Naive thymus-derived CD4-positive, alpha-beta T cell (primary cell): ENCODE measurements at regions of chr11 and their contacts with region 1.

Region 1: DNA sequence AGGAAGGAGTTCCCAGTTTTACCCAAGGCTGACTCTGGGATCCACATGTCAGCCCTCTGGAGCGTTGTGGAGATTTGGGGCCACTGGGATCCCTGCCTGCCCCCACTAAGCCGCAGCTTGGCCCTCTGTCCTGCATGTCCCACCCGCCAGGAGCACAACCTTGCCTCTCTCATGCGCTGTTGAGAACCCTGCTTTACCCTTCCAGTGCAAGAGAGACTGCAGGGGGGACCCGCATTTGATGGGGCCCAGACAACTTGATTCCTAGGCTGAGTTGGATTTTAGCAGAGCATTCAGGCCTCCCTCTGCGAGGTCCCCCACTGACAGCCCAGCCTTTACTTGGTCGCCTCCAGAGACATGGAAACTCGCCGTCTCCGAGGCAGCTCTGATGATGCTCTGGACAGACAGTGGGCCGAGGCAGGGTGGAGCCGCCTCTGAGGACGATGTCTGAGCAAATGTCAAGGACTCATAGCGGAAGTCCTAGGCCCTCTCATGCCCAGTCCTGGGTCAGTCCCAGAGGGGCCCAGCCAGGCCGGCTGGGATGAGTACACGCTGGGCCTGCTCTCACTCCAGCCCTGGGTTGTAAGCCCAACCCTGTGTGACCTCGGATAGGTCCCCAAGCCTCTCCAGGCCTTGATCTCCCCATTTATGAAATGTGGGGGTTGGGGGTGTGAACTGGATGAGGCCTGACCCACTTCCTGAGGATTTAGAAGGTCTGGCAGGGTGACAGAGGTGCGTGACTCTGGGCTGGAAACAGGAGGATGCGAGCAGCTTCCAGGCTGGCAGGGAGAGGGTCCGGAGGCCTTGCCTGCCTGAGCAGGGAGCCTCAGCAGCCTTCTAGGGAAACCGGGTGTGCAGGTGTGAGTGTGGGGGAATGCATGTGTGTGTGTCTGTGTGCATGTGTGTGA is 630 bp downstream of the CD5 start:
- DNase-seq: peak in 3 of 9 donors; percentile 39 to 47 (median 40)
- ATAC-seq: peak; percentile 28
- H3K4me3 ChIP-seq: peak overlapping the region; percentile 100
- H3K4me3 Mint-ChIP-seq: peak overlapping the region in 1 of 10 donors; percentile 97
- H3K27ac ChIP-seq: peak overlapping the region; percentile 98
- H3K27ac Mint-ChIP-seq: no peak overlapping the region
- H3K4me1 ChIP-seq: peaks cover 39 to 46% of the 10 kb centered on the region in 2 donors
- H3K4me1 Mint-ChIP-seq: peaks cover 17 to 48% (median 40%) of the 10 kb centered on the region in 7 donors
- H3K27me3 ChIP-seq: no peaks in the 10 kb centered on the region
- H3K27me3 Mint-ChIP-seq: no peaks in the 10 kb centered on the region

Region 2: GRCh38 chr11:61021661-61022212 is 81.2 kb before region 1 on chr11:
- CTCF ChIA-PET with region 1: no interaction called
- POLR2A ChIA-PET with region 1: interaction called, 10 read pairs
- intact Hi-C with region 1: loop called in 1 of 2 experiments (anchors 1 kb)
- DNase-seq: peak; percentile 72 to 98 (median 96)
- ATAC-seq: peak; percentile 91
- H3K4me3 ChIP-seq: peak overlapping the region; percentile 53
- H3K4me3 Mint-ChIP-seq: peak overlapping the region; percentile 68 to 90 (median 81)
- H3K27ac ChIP-seq: peak overlapping the region; percentile 82
- H3K27ac Mint-ChIP-seq: peak overlapping the region; percentile 88 to 100 (median 98)
- H3K4me1 ChIP-seq: peaks cover 49 to 56% of the 10 kb centered on the region in 2 donors
- H3K4me1 Mint-ChIP-seq: peaks cover 40 to 79% (median 76%) of the 10 kb centered on the region in 7 donors
- H3K27me3 ChIP-seq: no peaks in the 10 kb centered on the region
- H3K27me3 Mint-ChIP-seq: no peaks in the 10 kb centered on the region

Region 3: DNA sequence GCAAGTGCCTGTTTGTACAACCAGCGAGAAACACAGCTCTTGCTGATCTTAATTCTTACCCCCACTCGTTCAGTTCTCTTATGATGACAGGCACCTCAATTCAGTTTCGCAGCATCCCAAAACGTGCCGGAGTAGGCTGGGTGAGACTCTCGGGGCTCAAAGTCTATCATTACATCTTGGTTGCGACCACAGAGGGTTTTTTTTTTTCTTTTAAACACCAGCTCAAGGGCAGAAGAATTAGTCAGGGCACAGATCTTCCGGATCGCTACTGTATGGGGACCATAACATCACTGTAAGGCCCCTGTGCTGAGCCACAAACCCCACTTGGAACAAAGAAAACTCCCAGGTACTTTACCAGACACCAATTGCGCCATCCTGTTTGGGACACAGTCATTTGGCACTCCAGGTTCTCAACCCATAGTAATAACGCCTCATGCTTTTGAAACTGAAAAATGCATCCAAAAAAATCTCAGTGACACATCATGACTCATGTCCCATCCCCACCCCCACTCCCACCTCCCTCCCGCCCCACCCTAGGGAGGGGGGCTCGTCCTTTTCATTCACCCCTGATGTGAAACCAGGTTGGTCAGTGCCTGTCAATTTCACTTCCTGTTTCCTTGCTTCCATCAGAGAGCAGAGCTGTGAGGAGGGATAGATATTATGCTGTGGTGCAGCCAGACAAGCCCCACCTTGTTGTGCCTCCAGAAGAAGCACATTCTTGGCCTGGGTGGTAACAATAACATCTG is 41.7 kb before region 1 on chr11:
- CTCF ChIA-PET with region 1: interaction called, 4 read pairs
- POLR2A ChIA-PET with region 1: interaction called, 7 read pairs
- intact Hi-C with region 1: loop called in 1 of 2 experiments (anchors 5 kb)
- DNase-seq: peak in 7 of 9 donors; percentile 47 to 89 (median 56)
- ATAC-seq: peak; percentile 86
- H3K4me3 ChIP-seq: peak overlapping the region; percentile 34
- H3K4me3 Mint-ChIP-seq: peak overlapping the region; percentile 75 to 94 (median 83)
- H3K27ac ChIP-seq: peak overlapping the region; percentile 72
- H3K27ac Mint-ChIP-seq: peak overlapping the region; percentile 88 to 99 (median 96)
- H3K4me1 ChIP-seq: peaks cover 24 to 48% of the 10 kb centered on the region in 2 donors
- H3K4me1 Mint-ChIP-seq: peaks cover 47 to 83% (median 80%) of the 10 kb centered on the region in 7 donors
- H3K27me3 ChIP-seq: no peaks in the 10 kb centered on the region
- H3K27me3 Mint-ChIP-seq: no peaks in the 10 kb centered on the region

Region 4: GRCh38 chr11:61091373-61092279 is 11.3 kb before region 1 on chr11:
- CTCF ChIA-PET with region 1: interaction called, 5 read pairs
- POLR2A ChIA-PET with region 1: interaction called, 33 read pairs
- intact Hi-C with region 1: loop called (anchors 1 kb)
- DNase-seq: peak in 1 of 9 donors; percentile 74
- ATAC-seq: peak; percentile 34
- H3K4me3 ChIP-seq: peak overlapping the region; percentile 27
- H3K4me3 Mint-ChIP-seq: peak overlapping the region; percentile 41 to 90 (median 74)
- H3K27ac ChIP-seq: peak overlapping the region; percentile 79
- H3K27ac Mint-ChIP-seq: peak overlapping the region; percentile 86 to 98 (median 91)
- H3K4me1 ChIP-seq: peaks cover 10 to 27% of the 10 kb centered on the region in 2 donors
- H3K4me1 Mint-ChIP-seq: peaks cover 28 to 72% (median 49%) of the 10 kb centered on the region in 7 donors
- H3K27me3 ChIP-seq: no peaks in the 10 kb centered on the region
- H3K27me3 Mint-ChIP-seq: no peaks in the 10 kb centered on the region

Region 5: DNA sequence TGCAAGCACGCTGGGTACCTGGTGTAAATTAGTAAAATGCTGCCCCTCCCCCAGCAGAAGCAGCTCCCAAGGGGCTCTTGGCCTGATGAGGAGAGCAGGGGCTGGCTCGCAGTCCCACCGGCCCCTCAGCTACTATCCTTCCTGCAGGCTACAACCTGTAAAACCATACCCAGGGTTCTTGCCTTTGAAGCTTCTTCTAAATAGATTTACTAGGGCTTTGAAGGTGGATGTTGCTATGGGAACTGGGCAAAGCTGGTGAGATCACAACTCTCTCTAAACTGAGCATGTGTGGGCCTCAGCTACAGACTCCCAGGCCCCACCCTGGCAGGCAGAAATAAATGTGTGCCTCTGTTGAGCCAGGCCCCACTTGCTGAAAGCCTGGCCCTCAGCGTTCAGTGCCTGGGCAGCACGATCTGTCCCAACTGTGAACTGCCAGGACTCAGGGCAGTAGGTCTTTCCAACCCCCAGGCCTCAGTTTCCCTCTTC is 17.8 kb after region 1 on chr11:
- CTCF ChIA-PET with region 1: interaction called, 4 read pairs
- POLR2A ChIA-PET with region 1: interaction called, 16 read pairs
- intact Hi-C with region 1: loop called in 1 of 2 experiments (anchors 1 kb)
- DNase-seq: peak in 7 of 9 donors; percentile 81 to 92 (median 88)
- ATAC-seq: peak; percentile 93
- H3K4me3 ChIP-seq: peak overlapping the region; percentile 21
- H3K4me3 Mint-ChIP-seq: peak overlapping the region in 9 of 10 donors; percentile 73 to 85 (median 82)
- H3K27ac ChIP-seq: peak overlapping the region; percentile 79
- H3K27ac Mint-ChIP-seq: peak overlapping the region; percentile 77 to 100 (median 99)
- H3K4me1 ChIP-seq: peaks cover 15 to 45% of the 10 kb centered on the region in 2 donors
- H3K4me1 Mint-ChIP-seq: peaks cover 40 to 77% (median 64%) of the 10 kb centered on the region in 7 donors
- H3K27me3 ChIP-seq: no peaks in the 10 kb centered on the region
- H3K27me3 Mint-ChIP-seq: no peaks in the 10 kb centered on the region